PC-9 (cell line): ENCODE measurements at regions of chr4 and their contacts with region 1.

Region 1: GRCh38 chr4:48127682-48128394 is 6.2 kb downstream of the TXK start:
- DNase-seq: peak; percentile 84 to 94
- H3K4me3 ChIP-seq: peak overlapping the region; percentile 40; the same call in 1 of the 2 replicates
- H3K27ac ChIP-seq: peak overlapping the region; percentile 74
- H3K4me1 ChIP-seq: peaks cover 59% of the 10 kb centered on the region
- H3K27me3 ChIP-seq: no peaks in the 10 kb centered on the region
- CTCF ChIP-seq: peak; percentile 63

Region 2: DNA sequence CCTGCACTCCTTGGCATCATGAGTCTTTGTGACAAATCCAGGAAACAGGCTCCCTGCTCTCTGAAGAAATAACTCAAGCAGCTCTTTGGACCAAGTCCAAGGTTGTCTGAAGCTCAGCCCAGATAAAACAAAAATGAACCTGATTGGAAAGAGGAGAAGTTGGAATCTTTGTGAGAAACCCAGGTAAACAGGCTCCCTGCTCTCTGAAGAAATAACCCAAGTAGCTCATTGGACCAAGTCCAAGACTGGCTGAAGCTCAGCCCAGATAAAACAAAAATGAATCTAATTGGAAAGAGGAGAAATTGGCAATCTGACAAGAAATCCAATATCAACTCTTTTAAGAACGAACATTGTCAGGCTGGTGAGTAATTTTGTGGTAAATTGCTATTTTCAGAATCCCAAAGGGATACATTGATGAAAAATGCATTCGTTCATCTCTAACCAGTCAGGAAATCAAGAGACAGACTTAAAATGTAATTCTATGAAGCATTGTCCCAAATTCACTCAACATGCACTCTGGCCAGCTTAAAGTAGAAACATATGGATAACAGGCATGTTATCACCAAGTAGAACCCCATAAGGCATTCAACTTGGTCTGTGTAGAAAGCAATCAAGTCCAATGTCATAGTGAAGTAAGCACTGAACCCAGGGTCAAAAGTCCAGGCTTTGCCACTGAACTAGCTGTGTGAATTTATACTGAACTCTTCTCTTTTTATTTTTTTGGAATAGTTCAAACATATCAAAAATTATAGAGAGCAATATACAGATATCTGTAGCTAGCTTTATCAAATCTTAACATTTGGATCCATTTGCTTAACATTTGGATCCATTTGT is 196.7 kb before region 1 on chr4:
- CTCF ChIA-PET with region 1: no interaction called
- POLR2A ChIA-PET with region 1: no interaction called
- intact Hi-C with region 1: no loop called
- DNase-seq: no peak
- H3K4me3 ChIP-seq: no peak overlapping the region
- H3K27ac ChIP-seq: no peak overlapping the region
- H3K4me1 ChIP-seq: no peaks in the 10 kb centered on the region
- H3K27me3 ChIP-seq: no peaks in the 10 kb centered on the region
- CTCF ChIP-seq: no peak

Region 3: GRCh38 chr4:47990145-47990544 is 137.7 kb before region 1 on chr4:
- CTCF ChIA-PET with region 1: no interaction called
- POLR2A ChIA-PET with region 1: no interaction called
- intact Hi-C with region 1: no loop called
- DNase-seq: no peak
- H3K4me3 ChIP-seq: no peak overlapping the region
- H3K27ac ChIP-seq: no peak overlapping the region
- H3K4me1 ChIP-seq: no peaks in the 10 kb centered on the region
- H3K27me3 ChIP-seq: no peaks in the 10 kb centered on the region
- CTCF ChIP-seq: no peak

Region 4: GRCh38 chr4:48016141-48017103 is 111.4 kb before region 1 on chr4 and contains the starts of genes CNGA1 and NIPAL1:
- CTCF ChIA-PET with region 1: no interaction called
- POLR2A ChIA-PET with region 1: no interaction called
- intact Hi-C with region 1: loop called (anchors 2 kb)
- DNase-seq: peak; percentile 83 to 93
- H3K4me3 ChIP-seq: peak within 1 kb of the TSS; percentile 98
- H3K27ac ChIP-seq: peak within 1 kb of the TSS; percentile 93
- H3K4me1 ChIP-seq: peaks cover 32% of the 10 kb centered on the region
- H3K27me3 ChIP-seq: no peaks in the 10 kb centered on the region
- CTCF ChIP-seq: peak; percentile 52; the same call in 1 of the 2 replicates
- total RNA-seq, gene CNGA1: 1.4 and 1.8 TPM in 2 replicates
- total RNA-seq, gene NIPAL1: 7.0 and 8.2 TPM in 2 replicates

Region 5: GRCh38 chr4:48141048-48141447 is 13.2 kb after region 1 on chr4:
- CTCF ChIA-PET with region 1: interaction called, 5 read pairs
- POLR2A ChIA-PET with region 1: no interaction called
- intact Hi-C with region 1: loop called (anchors 1 kb)
- DNase-seq: peak in 1 of 2 experiments; percentile 48
- H3K4me3 ChIP-seq: no peak overlapping the region
- H3K27ac ChIP-seq: no peak overlapping the region
- H3K4me1 ChIP-seq: peaks cover 6% of the 10 kb centered on the region; the same call in 1 of the 2 replicates
- H3K27me3 ChIP-seq: no peaks in the 10 kb centered on the region
- CTCF ChIP-seq: peak; percentile 76

Region 6: DNA sequence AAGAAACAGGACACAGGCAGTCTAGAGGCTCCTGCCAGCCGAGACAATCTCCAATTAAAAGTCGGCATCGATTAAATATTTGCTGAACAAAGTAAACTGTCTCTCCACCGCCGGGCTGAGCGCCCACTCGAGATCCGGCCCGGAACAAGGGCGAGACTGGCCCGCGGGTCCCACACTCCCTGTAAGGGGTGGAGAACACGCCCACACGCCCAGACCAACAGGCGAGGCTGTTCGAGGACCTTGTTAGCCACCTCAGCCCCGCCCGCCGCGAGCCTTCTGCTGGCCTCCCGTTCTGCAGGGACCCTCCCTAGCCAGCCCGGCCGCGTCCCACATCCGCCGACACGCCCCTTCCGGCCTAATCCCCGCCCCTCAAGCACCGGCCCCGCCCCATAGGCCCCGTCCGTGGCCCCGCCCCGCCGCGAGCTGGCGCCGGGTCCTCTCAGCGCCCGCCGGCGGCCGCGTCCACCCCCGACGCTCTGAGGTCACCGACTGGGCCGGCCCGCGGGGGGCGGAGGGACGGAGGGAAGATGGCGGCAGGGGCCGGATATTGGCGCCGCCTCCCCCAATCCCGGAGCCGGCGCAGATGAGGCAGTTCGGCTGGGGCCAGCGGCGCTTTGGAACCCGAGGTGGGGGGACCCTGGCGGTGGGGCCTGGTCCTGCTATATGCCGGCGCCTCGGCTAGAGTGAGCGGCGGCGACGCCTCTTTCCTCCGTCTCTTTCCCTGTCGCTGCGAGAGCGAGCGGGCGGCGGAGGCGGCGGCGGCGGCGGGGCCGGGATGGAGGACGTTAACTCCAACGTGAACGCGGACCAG is 213.3 kb after region 1 on chr4 and contains the start of gene SLAIN2:
- CTCF ChIA-PET with region 1: interaction called, 3 read pairs
- POLR2A ChIA-PET with region 1: no interaction called
- intact Hi-C with region 1: loop called (anchors 2 kb)
- DNase-seq: peak; percentile 86 to 99
- H3K4me3 ChIP-seq: peak within 1 kb of the TSS; percentile 90
- H3K27ac ChIP-seq: peak within 1 kb of the TSS; percentile 82
- H3K4me1 ChIP-seq: peaks cover 58% of the 10 kb centered on the region
- H3K27me3 ChIP-seq: no peaks in the 10 kb centered on the region
- CTCF ChIP-seq: no peak
- total RNA-seq, gene SLAIN2: 31.5 and 70.4 TPM in 2 replicates

Region 7: DNA sequence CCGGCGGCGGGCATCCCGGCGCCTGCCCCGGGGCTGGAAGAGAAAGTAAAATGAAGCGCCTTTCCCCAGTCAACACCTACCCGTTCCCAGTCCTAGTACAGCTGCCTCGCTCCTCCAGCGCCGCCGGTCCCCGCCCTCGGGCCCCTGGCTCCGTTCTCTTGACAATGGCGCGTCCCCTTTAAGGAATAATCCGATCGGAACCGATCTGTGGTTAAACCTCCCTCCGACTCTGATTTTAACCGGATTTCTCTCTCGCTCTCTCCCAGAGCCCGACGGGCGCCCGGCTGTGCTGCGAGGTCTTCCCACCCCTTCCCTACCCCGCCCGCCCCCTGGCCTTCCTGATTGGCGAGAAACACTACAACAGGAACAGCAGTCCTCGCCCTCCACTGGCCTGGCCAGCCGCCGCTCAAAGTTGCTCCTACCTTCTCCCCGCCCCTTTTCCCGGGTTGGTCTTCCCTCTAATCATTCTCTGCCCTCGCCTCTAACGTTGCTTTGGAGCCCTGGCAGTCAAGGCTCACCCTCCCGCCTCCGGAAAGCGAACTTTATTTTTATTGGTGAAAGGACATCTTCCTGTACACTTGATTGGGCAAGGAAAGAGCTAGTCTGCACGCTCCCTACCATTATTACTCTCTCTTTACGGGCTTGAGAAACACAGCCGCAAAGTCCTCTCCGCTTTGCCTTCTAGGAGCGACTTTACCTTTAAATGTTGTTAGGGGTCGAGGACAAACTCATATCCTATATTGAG is 652.3 kb after region 1 on chr4 and contains the start of gene FRYL:
- CTCF ChIA-PET with region 1: no interaction called
- POLR2A ChIA-PET with region 1: no interaction called
- intact Hi-C with region 1: loop called (anchors 2 kb)
- DNase-seq: peak; percentile 98
- H3K4me3 ChIP-seq: peak within 1 kb of the TSS; percentile 97
- H3K27ac ChIP-seq: peak within 1 kb of the TSS; percentile 75
- H3K4me1 ChIP-seq: peaks cover 25% of the 10 kb centered on the region
- H3K27me3 ChIP-seq: no peaks in the 10 kb centered on the region
- CTCF ChIP-seq: no peak
- total RNA-seq, gene FRYL: 43.5 and 53.9 TPM in 2 replicates